ENCODE measurements at regions of chr7 and their contacts with region 1.

Region 1: GRCh38 chr7:266851-267840 is 22.8 kb upstream of the FOXL3 start:
- DNase-seq: peak; percentile 69
- H3K4me3 Mint-ChIP-seq: no peak overlapping the region
- H3K27ac Mint-ChIP-seq: no peak overlapping the region
- H3K4me1 Mint-ChIP-seq: no peaks in the 10 kb centered on the region
- H3K27me3 Mint-ChIP-seq: peaks cover 14% of the 10 kb centered on the region
- CTCF ChIP-seq: peak; percentile 96

Region 2: DNA sequence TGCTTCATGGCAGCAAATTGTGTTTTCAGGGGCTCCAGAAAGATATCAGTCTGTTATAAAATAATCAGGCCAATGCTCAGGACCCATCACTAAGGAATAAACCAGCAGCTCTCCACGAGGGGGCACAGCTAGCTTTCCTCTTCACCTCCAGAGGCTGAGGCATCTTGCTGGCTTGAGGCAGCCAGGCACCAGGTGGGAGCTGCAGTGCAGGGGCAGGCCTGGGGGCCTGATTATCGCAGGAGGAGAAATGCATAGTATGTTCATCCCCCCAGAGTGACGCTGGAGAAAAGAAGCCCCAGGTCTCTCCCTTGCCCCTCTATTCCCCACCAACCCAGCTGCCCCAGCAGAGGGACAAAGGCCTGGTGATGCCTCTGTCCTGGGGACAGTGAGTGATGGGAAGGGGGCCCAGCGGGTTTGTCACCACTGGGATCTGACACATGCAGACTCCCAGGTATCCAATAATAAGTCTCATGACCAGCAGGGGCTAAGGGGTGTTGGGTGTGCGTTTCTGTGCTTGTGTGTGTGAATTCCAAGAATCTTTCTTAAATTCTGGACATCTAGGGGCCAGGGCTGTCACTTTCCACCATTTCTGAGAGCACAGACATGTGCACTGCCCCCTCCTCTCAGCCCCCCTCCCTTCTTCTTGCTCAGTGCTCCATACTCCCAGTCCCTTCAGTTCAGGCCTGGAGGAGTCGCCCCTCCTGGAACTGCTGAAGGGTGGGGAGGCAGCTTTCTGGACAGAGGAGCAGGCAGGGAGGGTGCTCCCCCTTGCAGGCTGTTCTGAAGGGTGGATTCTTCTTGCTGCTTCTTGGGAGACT is 202.8 kb before region 1 on chr7:
- CTCF ChIA-PET with region 1: interaction called, 9 read pairs
- POLR2A ChIA-PET with region 1: no interaction called
- intact Hi-C with region 1: loop called (anchors 1 kb)
- DNase-seq: peak; percentile 80
- H3K4me3 Mint-ChIP-seq: no peak overlapping the region
- H3K27ac Mint-ChIP-seq: no peak overlapping the region
- H3K4me1 Mint-ChIP-seq: no peaks in the 10 kb centered on the region
- H3K27me3 Mint-ChIP-seq: no peaks in the 10 kb centered on the region
- CTCF ChIP-seq: peak; percentile 56

Region 3: GRCh38 chr7:249989-250388 is 17.2 kb before region 1 on chr7:
- CTCF ChIA-PET with region 1: interaction called, 11 read pairs
- POLR2A ChIA-PET with region 1: no interaction called
- intact Hi-C with region 1: no loop called
- DNase-seq: no peak
- H3K4me3 Mint-ChIP-seq: no peak overlapping the region
- H3K27ac Mint-ChIP-seq: no peak overlapping the region
- H3K4me1 Mint-ChIP-seq: no peaks in the 10 kb centered on the region
- H3K27me3 Mint-ChIP-seq: no peaks in the 10 kb centered on the region
- CTCF ChIP-seq: no peak